Breast epithelium (tissue), 4 donors: ENCODE measurements at regions of chr17 and their contacts with region 1.

Region 1: GRCh38 chr17:1516388-1517161 is at the start of gene INPP5K:
- DNase-seq: peak; percentile 98
- H3K4me3 ChIP-seq: peak within 1 kb of the TSS; percentile 92 to 95 (median 93)
- H3K27ac ChIP-seq: peak within 1 kb of the TSS; percentile 91 to 97
- H3K4me1 ChIP-seq: peaks cover 0 to 13% of the 10 kb centered on the region in 2 donors
- H3K27me3 ChIP-seq: no peaks in the 10 kb centered on the region
- CTCF ChIP-seq: peak; percentile 17 to 26 (median 20)
- POLR2A ChIP-seq: no peak
- total RNA-seq, gene INPP5K: 75.2 to 177 (median 88.8) TPM

Region 2: GRCh38 chr17:1365445-1366039 is 151.0 kb before region 1 on chr17:
- intact Hi-C with region 1: loop called (anchors 10 kb)
- DNase-seq: peak in 1 of 2 donors; percentile 60
- H3K4me3 ChIP-seq: no peak overlapping the region
- H3K27ac ChIP-seq: peak overlapping the region in 1 of 2 donors; percentile 50
- H3K4me1 ChIP-seq: peaks cover 0 to 5% of the 10 kb centered on the region in 2 donors
- H3K27me3 ChIP-seq: no peaks in the 10 kb centered on the region
- CTCF ChIP-seq: peak; percentile 87 to 95 (median 91)
- POLR2A ChIP-seq: no peak

Region 3: DNA sequence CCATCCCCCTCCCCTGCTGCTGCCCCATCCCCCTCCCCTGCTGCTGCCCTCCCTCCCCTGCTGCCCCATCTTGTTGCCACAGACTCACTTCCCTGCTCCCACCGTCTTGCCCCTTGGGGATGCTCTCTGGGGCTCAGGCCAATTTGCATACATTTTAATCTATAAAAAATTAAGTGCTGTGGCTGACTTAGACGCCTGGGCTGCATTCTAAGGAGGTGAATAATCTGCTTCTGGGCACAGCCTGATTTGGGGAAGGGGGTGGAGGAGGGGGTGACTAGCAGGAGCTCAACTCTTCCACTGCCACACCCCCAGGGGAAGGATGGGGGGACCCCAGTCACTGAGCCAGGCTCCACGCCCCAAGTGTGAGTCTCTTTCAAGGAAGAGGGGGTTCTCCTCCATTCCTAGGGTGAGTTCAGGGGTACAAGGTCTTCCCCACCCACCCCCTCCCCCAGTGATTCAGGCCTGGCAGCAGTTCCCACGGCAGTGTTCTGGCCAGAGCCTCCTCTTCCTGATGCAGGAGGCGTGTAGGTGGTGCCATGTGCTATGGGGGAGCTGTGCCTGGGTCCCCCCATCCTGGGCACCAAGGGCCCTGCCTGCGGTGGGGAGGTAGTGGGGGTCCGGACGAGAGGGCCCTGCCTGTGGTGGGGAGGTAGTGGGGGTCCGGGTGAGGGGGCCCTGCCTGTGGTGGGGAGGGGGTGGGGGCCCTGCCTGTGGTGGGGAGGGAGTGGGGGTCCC is 518.4 kb after region 1 on chr17:
- intact Hi-C with region 1: no loop called
- DNase-seq: no peak
- H3K4me3 ChIP-seq: no peak overlapping the region
- H3K27ac ChIP-seq: no peak overlapping the region
- H3K4me1 ChIP-seq: peaks cover 0 to 7% of the 10 kb centered on the region in 2 donors
- H3K27me3 ChIP-seq: no peaks in the 10 kb centered on the region
- CTCF ChIP-seq: no peak
- POLR2A ChIP-seq: no peak